ENCODE measurements at regions of chr5 and their contacts with region 1.

Region 1: DNA sequence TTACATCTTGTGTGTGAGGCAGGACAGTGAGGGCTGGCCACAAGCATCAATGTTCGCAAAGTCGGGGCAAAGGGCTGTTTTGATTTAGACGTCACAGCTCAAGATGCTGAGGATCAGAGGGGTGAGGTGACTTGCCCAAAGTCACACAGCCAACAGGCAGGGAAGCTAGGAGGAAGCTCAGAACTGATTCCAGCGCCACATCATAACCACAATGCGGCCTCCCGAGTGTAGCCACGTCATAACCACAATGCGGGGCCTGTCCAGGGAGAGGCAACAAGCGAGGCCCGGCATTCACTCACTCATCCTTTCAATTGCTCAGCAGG is 14.2 kb downstream of the STK10 start:
- DNase-seq: peak; percentile 77
- H3K4me3 Mint-ChIP-seq: peak overlapping the region; percentile 95
- H3K27ac Mint-ChIP-seq: peak overlapping the region; percentile 96
- H3K4me1 Mint-ChIP-seq: peaks cover 92% of the 10 kb centered on the region
- H3K27me3 Mint-ChIP-seq: no peaks in the 10 kb centered on the region

Region 2: GRCh38 chr5:171152382-171152781 is 1021.4 kb before region 1 on chr5:
- CTCF ChIA-PET with region 1: no interaction called
- DNase-seq: no peak
- H3K4me3 Mint-ChIP-seq: no peak overlapping the region
- H3K27ac Mint-ChIP-seq: no peak overlapping the region
- H3K4me1 Mint-ChIP-seq: no peaks in the 10 kb centered on the region
- H3K27me3 Mint-ChIP-seq: no peaks in the 10 kb centered on the region

Region 3: GRCh38 chr5:171975262-171975876 is 198.4 kb before region 1 on chr5:
- CTCF ChIA-PET with region 1: no interaction called
- DNase-seq: no peak
- H3K4me3 Mint-ChIP-seq: no peak overlapping the region
- H3K27ac Mint-ChIP-seq: no peak overlapping the region
- H3K4me1 Mint-ChIP-seq: peaks cover 8% of the 10 kb centered on the region
- H3K27me3 Mint-ChIP-seq: no peaks in the 10 kb centered on the region

Region 4: GRCh38 chr5:172162323-172162986 is 11.3 kb before region 1 on chr5:
- CTCF ChIA-PET with region 1: interaction called, 10 read pairs
- DNase-seq: peak; percentile 6
- H3K4me3 Mint-ChIP-seq: no peak overlapping the region
- H3K27ac Mint-ChIP-seq: no peak overlapping the region
- H3K4me1 Mint-ChIP-seq: peaks cover 63% of the 10 kb centered on the region
- H3K27me3 Mint-ChIP-seq: no peaks in the 10 kb centered on the region

Measured in activated naive CD4-positive, alpha-beta T cell treated with anti-CD3 and anti-CD28 coated beads, Interleukin-2, amount 10 ng/mL, durations not matched to agents 7 days and 5 days (primary cell).